Naive thymus-derived CD4-positive, alpha-beta T cell (primary cell): ENCODE measurements at regions of chr3 and their contacts with region 1.

Region 1: GRCh38 chr3:32302601-32303398 is 64.3 kb downstream of the CMTM8 start:
- DNase-seq: peak in 1 of 9 donors; percentile 12
- ATAC-seq: no peak
- H3K4me3 ChIP-seq: peak overlapping the region; percentile 8
- H3K4me3 Mint-ChIP-seq: peak overlapping the region; percentile 72 to 88 (median 80)
- H3K27ac ChIP-seq: peak overlapping the region; percentile 66
- H3K27ac Mint-ChIP-seq: peak overlapping the region; percentile 94 to 99 (median 96)
- H3K4me1 ChIP-seq: peaks cover 29 to 33% of the 10 kb centered on the region in 2 donors
- H3K4me1 Mint-ChIP-seq: peaks cover 27 to 79% (median 70%) of the 10 kb centered on the region in 7 donors
- H3K27me3 ChIP-seq: no peaks in the 10 kb centered on the region
- H3K27me3 Mint-ChIP-seq: no peaks in the 10 kb centered on the region

Region 2: DNA sequence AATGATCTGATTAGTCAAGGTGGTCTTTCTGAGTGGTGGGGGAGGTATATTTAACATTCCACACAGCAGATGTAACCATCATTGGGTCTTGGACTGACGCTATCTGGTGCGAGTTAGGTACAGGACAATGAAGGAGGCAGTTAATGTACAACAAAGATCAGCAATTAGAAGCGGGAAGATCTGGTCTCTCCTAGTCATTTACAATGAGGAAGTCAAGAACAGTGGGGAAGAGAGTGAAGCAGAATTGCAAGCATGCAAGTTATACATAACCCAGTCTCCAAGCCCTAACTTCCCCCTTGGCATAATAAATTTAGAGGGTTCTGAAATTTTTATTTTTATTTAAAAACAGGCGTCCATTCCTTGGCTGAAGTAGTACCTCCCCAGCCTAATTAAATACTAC is 182.3 kb before region 1 on chr3:
- CTCF ChIA-PET with region 1: no interaction called
- POLR2A ChIA-PET with region 1: no interaction called
- intact Hi-C with region 1: loop called in 1 of 2 experiments (anchors 10 kb)
- DNase-seq: no peak
- ATAC-seq: peak; percentile 67
- H3K4me3 ChIP-seq: no peak overlapping the region
- H3K4me3 Mint-ChIP-seq: no peak overlapping the region
- H3K27ac ChIP-seq: no peak overlapping the region
- H3K27ac Mint-ChIP-seq: no peak overlapping the region
- H3K4me1 ChIP-seq: peaks cover 4 to 23% of the 10 kb centered on the region in 2 donors
- H3K4me1 Mint-ChIP-seq: peaks cover 21 to 62% (median 53%) of the 10 kb centered on the region in 7 donors
- H3K27me3 ChIP-seq: no peaks in the 10 kb centered on the region
- H3K27me3 Mint-ChIP-seq: no peaks in the 10 kb centered on the region

Region 3: GRCh38 chr3:32313723-32314473 is 11.1 kb after region 1 on chr3:
- CTCF ChIA-PET with region 1: interaction called, 4 read pairs
- POLR2A ChIA-PET with region 1: interaction called, 26 read pairs
- intact Hi-C with region 1: loop called (anchors 1 kb)
- DNase-seq: peak in 1 of 9 donors; percentile 38
- ATAC-seq: peak; percentile 37
- H3K4me3 ChIP-seq: no peak overlapping the region
- H3K4me3 Mint-ChIP-seq: peak overlapping the region; percentile 2 to 81 (median 44)
- H3K27ac ChIP-seq: peak overlapping the region; percentile 30
- H3K27ac Mint-ChIP-seq: peak overlapping the region; percentile 53 to 98 (median 79)
- H3K4me1 ChIP-seq: peaks cover 0 to 14% of the 10 kb centered on the region in 2 donors
- H3K4me1 Mint-ChIP-seq: peaks cover 17 to 52% (median 30%) of the 10 kb centered on the region in 7 donors
- H3K27me3 ChIP-seq: no peaks in the 10 kb centered on the region
- H3K27me3 Mint-ChIP-seq: no peaks in the 10 kb centered on the region

Region 4: GRCh38 chr3:32334675-32335074 is 31.9 kb after region 1 on chr3:
- CTCF ChIA-PET with region 1: interaction called, 224 read pairs
- POLR2A ChIA-PET with region 1: interaction called, 20 read pairs
- intact Hi-C with region 1: loop called in 1 of 2 experiments (anchors 1 kb)
- DNase-seq: peak; percentile 15 to 72 (median 65)
- ATAC-seq: peak; percentile 83
- H3K4me3 ChIP-seq: no peak overlapping the region
- H3K4me3 Mint-ChIP-seq: peak overlapping the region; percentile 5 to 87 (median 66)
- H3K27ac ChIP-seq: peak overlapping the region; percentile 49
- H3K27ac Mint-ChIP-seq: peak overlapping the region; percentile 78 to 96 (median 92)
- H3K4me1 ChIP-seq: peaks cover 0 to 32% of the 10 kb centered on the region in 2 donors
- H3K4me1 Mint-ChIP-seq: peaks cover 39 to 67% (median 60%) of the 10 kb centered on the region in 7 donors
- H3K27me3 ChIP-seq: no peaks in the 10 kb centered on the region
- H3K27me3 Mint-ChIP-seq: no peaks in the 10 kb centered on the region

Region 5: GRCh38 chr3:32502118-32502945 is 199.5 kb after region 1 on chr3 and contains the start of gene CMTM6:
- CTCF ChIA-PET with region 1: no interaction called
- POLR2A ChIA-PET with region 1: no interaction called
- intact Hi-C with region 1: loop called in 1 of 2 experiments (anchors 1 kb)
- DNase-seq: peak; percentile 49 to 77 (median 70)
- ATAC-seq: peak; percentile 92
- H3K4me3 ChIP-seq: peak within 1 kb of the TSS; percentile 89
- H3K4me3 Mint-ChIP-seq: peak within 1 kb of the TSS; percentile 79 to 97 (median 93)
- H3K27ac ChIP-seq: peak within 1 kb of the TSS; percentile 98
- H3K27ac Mint-ChIP-seq: peak within 1 kb of the TSS; percentile 86 to 98 (median 90)
- H3K4me1 ChIP-seq: peaks cover 6 to 23% of the 10 kb centered on the region in 2 donors
- H3K4me1 Mint-ChIP-seq: peaks cover 28 to 48% (median 43%) of the 10 kb centered on the region in 7 donors
- H3K27me3 ChIP-seq: no peaks in the 10 kb centered on the region
- H3K27me3 Mint-ChIP-seq: peaks cover 0 to 4% (median 0%) of the 10 kb centered on the region in 5 donors
- total RNA-seq, gene CMTM6: 24.1 to 61.1 (median 38.1) TPM